ENCODE measurements at regions of chr6 and their contacts with region 1.

Region 1: DNA sequence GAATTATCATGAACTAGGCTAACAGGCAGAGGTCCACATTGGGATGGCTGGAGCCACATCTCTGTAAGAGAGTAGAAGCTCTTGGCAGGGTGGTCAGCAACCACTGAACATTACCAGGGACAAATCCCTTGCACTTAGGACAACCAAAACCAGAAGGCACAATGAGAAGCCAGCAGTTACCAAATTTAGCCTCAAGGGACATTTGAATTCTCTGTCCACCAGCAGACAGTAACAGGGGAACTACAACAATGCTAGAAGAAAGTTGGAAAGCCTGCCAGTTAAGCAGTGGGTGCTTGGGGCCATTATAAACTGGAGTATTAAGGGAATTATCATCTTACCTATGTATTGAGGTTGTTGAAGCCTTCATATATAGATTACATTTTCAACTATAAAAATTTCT is 16.4 kb upstream of the TAB2 start:
- DNase-seq: no peak
- CTCF ChIP-seq: no peak

Region 2: DNA sequence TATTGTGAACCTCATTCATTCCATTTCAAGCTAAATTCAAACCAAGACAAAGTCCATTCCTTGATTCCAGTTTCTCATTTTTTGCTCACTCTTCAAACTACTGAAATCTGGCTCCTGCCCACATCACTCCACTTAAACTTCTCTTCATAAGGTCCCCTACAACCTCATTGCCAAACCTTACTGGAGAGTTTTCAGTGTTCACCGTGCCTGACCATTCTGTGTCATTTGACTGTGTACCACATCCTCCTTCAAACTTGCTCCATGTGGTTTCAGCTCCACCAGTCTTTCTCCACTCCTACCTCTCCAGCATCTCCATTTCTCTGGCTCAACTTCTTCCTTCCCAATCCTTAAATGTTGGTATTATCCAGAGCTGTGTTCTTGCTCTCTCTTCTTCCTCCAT is 22.1 kb before region 1 on chr6:
- CTCF ChIA-PET with region 1: interaction called, 11 read pairs
- POLR2A ChIA-PET with region 1: no interaction called
- DNase-seq: no peak
- CTCF ChIP-seq: no peak

Region 3: GRCh38 chr6:149289192-149289741 is 11.8 kb before region 1 on chr6:
- CTCF ChIA-PET with region 1: interaction called, 12 read pairs
- POLR2A ChIA-PET with region 1: no interaction called
- DNase-seq: no peak
- CTCF ChIP-seq: no peak

Region 4: DNA sequence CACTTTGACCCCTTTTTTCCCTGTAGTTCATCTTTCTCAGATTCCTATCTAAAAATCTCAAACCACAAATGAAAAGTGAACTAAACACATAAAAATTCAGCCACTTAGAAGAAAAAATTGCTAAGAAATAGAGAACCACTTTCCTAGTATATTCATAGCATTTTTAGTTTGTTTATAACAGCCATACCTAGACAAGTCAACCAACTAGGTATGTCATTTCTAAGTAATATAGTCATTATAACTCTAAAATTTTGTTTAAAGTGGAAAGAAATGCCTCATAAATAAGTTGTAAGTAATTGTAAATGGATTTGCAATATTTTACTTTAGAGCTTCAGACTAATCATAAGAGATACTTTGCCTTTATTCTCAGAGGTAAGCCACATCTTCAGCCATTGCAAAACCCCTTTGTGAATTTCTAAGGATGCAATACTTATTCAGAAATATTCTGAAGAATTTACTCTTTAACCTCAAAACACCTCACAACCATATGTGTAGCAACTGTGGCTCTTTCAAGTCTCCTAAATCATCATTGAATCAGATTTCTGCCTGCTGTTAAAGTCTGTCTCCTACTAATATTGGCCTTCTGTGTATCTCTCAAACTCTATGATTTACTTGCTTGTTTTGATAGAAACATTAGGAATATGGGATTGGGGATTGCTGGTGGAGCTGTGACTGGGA is 92.1 kb after region 1 on chr6:
- CTCF ChIA-PET with region 1: no interaction called
- POLR2A ChIA-PET with region 1: no interaction called
- DNase-seq: no peak
- CTCF ChIP-seq: no peak

Measured in GM10248 (cell line).